ENCODE measurements at regions of chr18 and their contacts with region 1.

Region 1: DNA sequence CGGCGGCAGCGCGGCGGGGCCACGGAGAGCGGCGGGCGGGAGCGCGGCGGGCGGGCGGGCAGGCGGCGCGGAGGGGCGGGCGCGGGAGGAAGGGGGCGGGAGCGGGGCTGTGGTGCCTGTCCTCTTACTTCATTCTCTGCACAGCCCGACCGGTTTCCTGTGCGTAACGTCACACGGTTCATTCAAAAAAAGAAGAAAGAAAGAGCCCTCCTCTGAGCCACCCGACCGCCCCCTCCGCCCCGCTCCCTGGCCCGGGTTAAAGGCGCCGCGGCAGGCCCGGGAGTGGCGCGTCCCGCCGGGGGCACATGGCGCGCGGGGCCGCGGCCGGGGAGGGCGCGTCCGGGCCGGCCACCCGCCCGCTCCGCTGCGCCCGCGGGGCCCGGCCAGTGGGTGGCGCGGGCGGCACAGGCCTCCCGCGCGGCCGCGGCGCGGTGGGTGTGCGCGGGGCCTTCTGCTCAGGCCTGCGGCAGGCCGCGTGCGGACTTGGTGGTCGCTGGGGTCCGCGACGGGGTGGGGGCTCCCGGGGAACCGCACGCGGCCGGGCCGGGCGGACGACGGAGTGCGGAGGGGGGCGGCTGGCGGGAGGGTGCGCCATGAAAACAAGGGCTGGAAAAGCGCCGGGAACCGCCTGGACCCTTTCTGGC is 599 bp upstream of the BCL2 start:
- DNase-seq: peak; percentile 90
- H3K4me3 ChIP-seq: peak overlapping the region; percentile 22 to 89 (median 72)
- H3K27ac ChIP-seq: peak overlapping the region; percentile 91 to 94 (median 92)
- H3K4me1 ChIP-seq: peaks cover 3 to 39% (median 24%) of the 10 kb centered on the region in 4 donors
- H3K27me3 ChIP-seq: no peaks in the 10 kb centered on the region
- CTCF ChIP-seq: no peak
- EP300 ChIP-seq: no peak
- POLR2A ChIP-seq: peak; percentile 28

Region 2: GRCh38 chr18:63131106-63131958 is 188.8 kb before region 1 on chr18:
- in situ Hi-C with region 1: loop called in 3 of 4 experiments (anchors 5 to 10 kb)
- intact Hi-C with region 1: loop called (anchors 5 kb)
- DNase-seq: peak; percentile 74
- H3K4me3 ChIP-seq: no peak overlapping the region
- H3K27ac ChIP-seq: peak overlapping the region; percentile 55 to 64 (median 62)
- H3K4me1 ChIP-seq: peaks cover 0 to 20% (median 16%) of the 10 kb centered on the region in 4 donors
- H3K27me3 ChIP-seq: no peaks in the 10 kb centered on the region
- CTCF ChIP-seq: peak; percentile 61 to 72 (median 68)
- EP300 ChIP-seq: no peak
- POLR2A ChIP-seq: no peak

Region 3: DNA sequence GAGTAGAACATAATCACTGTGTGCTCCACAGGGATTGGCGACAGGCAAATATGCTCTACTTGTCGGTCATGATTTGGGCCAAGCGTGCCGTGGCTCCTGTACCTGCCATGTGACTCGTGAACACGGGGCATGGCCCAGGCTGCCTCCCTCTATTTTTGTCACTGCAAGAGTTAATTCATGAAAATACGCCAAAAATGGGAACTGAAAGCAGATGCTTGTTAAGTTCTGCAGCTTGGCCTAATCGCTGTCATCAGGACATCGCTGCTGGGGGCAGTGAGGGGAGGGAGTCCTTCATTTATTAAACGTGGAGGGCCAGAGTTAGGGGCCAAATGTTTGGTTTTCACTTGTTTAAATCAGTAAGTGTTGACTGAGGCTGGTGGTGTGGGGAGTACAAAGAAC is 178.4 kb before region 1 on chr18:
- in situ Hi-C with region 1: loop called in 3 of 4 experiments (anchors 5 to 10 kb)
- intact Hi-C with region 1: no loop called
- DNase-seq: peak; percentile 46
- H3K4me3 ChIP-seq: no peak overlapping the region
- H3K27ac ChIP-seq: peak overlapping the region in 3 of 4 donors; percentile 34 to 64 (median 51)
- H3K4me1 ChIP-seq: peaks cover 0 to 34% (median 13%) of the 10 kb centered on the region in 4 donors
- H3K27me3 ChIP-seq: no peaks in the 10 kb centered on the region
- CTCF ChIP-seq: no peak
- EP300 ChIP-seq: no peak
- POLR2A ChIP-seq: peak; percentile 10

Measured in transverse colon (tissue), 4 donors.